Endothelial cell of umbilical vein (primary cell): ENCODE measurements at regions of chr1 and their contacts with region 1.

Region 1: GRCh38 chr1:68384321-68384813 is 65.4 kb downstream of the RPE65 start:
- DNase-seq: peak; percentile 98
- H3K4me3 ChIP-seq: peak overlapping the region in 1 of 3 experiments; percentile 18
- H3K27ac ChIP-seq: peak overlapping the region; percentile 97
- H3K4me1 ChIP-seq: peaks cover 30% of the 10 kb centered on the region
- H3K27me3 ChIP-seq: no peaks in the 10 kb centered on the region
- CTCF ChIP-seq: peak; percentile 32 to 35
- POLR2A ChIP-seq: no peak

Region 2: GRCh38 chr1:68470388-68470970 is 86.1 kb after region 1 on chr1:
- CTCF ChIA-PET with region 1: no interaction called
- POLR2A ChIA-PET with region 1: no interaction called
- dilution Hi-C with region 1: no loop called
- intact Hi-C with region 1: no loop called
- DNase-seq: peak; percentile 50
- H3K4me3 ChIP-seq: no peak overlapping the region
- H3K27ac ChIP-seq: no peak overlapping the region
- H3K4me1 ChIP-seq: no peaks in the 10 kb centered on the region
- H3K27me3 ChIP-seq: no peaks in the 10 kb centered on the region
- CTCF ChIP-seq: peak; percentile 52 to 58
- POLR2A ChIP-seq: no peak

Region 3: GRCh38 chr1:68551459-68551858 is 167.1 kb after region 1 on chr1:
- CTCF ChIA-PET with region 1: no interaction called
- POLR2A ChIA-PET with region 1: no interaction called
- dilution Hi-C with region 1: no loop called
- intact Hi-C with region 1: loop called (anchors 1 kb)
- DNase-seq: peak; percentile 38
- H3K4me3 ChIP-seq: no peak overlapping the region
- H3K27ac ChIP-seq: no peak overlapping the region
- H3K4me1 ChIP-seq: peaks cover 15% of the 10 kb centered on the region
- H3K27me3 ChIP-seq: no peaks in the 10 kb centered on the region
- CTCF ChIP-seq: no peak
- POLR2A ChIP-seq: no peak

Region 4: DNA sequence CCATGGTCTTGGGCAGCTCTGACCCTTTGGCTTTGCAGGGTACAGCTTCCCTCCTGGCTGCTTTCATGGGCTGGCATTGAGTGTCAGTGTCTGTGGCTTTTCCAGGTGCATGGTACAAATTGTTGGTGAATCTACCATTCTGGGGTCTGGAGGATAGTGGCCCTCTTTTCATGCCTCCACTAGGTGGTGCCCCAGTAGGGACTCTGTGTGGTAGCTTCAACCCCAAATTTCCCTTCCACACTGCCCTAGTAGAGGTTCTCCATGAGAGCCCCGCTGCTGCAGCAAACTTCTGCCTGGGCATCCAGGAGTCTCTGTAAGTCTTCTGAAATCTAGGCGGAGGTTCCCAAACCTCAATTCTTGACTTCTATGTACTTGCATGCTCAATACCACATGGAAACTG is 688.8 kb after region 1 on chr1:
- CTCF ChIA-PET with region 1: no interaction called
- POLR2A ChIA-PET with region 1: no interaction called
- dilution Hi-C with region 1: no loop called
- intact Hi-C with region 1: no loop called
- DNase-seq: no peak
- H3K4me3 ChIP-seq: no peak overlapping the region
- H3K27ac ChIP-seq: no peak overlapping the region
- H3K4me1 ChIP-seq: no peaks in the 10 kb centered on the region
- H3K27me3 ChIP-seq: no peaks in the 10 kb centered on the region
- CTCF ChIP-seq: no peak
- POLR2A ChIP-seq: no peak